ENCODE measurements at regions of chr11 and their contacts with region 1.

Region 1: DNA sequence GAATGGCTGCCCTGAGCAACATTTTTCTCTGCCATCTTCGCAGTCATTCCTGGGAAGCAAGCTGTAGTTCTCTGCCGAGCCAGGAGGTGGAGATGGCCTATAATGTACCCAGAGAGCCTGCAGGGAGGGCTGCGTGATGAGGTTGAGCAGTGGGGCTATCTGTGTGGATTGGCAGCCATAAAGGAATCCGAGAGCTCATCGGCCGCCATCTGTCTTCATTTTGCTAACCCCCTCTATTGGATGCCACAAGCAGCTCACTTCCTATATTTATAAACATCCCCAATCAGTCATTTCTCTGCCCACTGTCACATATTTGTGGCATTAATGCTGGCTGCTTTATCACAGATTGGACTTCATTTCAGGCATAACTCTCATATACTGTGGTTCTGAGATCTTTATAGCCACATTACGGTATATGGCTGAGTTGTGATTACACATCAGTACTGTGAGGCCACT is 209.5 kb downstream of the NTM start:
- DNase-seq: peak; percentile 82
- H3K4me3 ChIP-seq: no peak overlapping the region
- CTCF ChIP-seq: peak; percentile 86

Region 2: GRCh38 chr11:131568305-131568704 is 11.7 kb before region 1 on chr11:
- CTCF ChIA-PET with region 1: interaction called, 13 read pairs
- POLR2A ChIA-PET with region 1: interaction called, 3 read pairs
- DNase-seq: no peak
- H3K4me3 ChIP-seq: no peak overlapping the region
- CTCF ChIP-seq: no peak

Region 3: DNA sequence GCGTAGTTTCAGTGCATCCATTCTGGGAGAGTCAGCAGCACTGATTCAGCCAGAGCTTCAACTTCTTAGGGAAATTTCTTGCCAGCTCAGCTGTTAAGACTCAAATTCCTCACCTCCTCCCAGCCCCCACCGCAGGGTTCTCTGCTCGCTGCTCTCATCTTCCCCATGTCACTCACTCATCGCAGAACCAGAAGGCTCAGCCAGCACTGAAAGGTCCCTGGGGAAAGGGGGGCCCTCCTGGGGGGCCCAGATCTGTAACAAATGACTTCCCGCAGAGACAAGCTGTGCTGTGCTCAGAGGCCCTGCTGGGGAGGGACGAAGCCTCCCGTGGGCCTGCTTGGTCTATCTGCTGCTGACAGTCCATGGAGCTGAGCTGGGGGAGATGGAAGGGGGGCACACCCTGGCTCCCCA is 11.1 kb after region 1 on chr11:
- CTCF ChIA-PET with region 1: interaction called, 32 read pairs
- POLR2A ChIA-PET with region 1: no interaction called
- DNase-seq: no peak
- H3K4me3 ChIP-seq: no peak overlapping the region
- CTCF ChIP-seq: no peak

Region 4: GRCh38 chr11:131609337-131609736 is 29.4 kb after region 1 on chr11:
- CTCF ChIA-PET with region 1: interaction called, 17 read pairs
- POLR2A ChIA-PET with region 1: no interaction called
- DNase-seq: peak; percentile 69
- H3K4me3 ChIP-seq: no peak overlapping the region
- CTCF ChIP-seq: no peak

Region 5: GRCh38 chr11:131629925-131630540 is 50.1 kb after region 1 on chr11:
- CTCF ChIA-PET with region 1: interaction called, 25 read pairs
- POLR2A ChIA-PET with region 1: no interaction called
- DNase-seq: no peak
- H3K4me3 ChIP-seq: no peak overlapping the region
- CTCF ChIP-seq: no peak

Region 6: DNA sequence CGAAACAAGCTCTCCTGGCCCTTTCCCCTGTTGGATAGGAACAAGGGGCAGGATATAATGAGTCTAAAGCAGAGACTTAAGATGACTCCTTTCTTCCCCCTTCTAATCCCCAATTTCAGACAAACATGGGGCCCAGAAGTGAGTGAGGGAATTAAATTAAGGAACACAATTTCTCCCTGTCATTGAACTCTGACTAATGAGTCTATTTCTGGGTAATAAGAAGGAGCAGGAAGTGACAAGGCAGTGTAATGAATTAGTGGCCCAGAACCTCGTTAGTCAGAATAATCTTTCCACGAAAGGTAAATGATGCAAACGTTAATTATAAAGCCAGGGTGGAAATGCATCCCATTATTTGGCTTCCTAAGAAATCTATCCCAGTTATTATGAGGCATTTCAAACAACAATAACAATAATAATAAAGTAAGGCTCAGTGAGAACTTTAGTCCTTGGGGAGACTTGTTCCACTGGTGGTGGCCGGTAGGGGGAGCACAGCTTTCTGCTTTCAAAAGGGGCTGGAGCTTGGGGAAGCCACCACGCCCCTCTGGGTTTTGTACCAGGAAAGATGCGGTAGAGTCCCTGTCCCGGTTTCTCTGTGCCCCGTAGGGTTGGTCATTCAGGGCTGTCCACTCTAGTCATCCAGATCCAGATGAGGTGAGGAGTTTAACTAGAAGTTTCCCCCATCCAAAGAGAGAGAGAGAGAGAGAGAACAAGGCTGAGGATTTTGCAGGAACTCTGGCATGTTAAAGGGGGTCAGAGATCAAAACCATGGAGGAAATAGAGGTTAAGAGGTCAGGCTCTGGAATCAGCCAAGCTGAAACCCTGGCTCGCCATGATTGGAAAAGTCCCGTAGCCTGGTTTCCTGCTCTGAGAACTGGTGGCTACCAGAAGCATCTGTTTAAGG is 88.8 kb after region 1 on chr11:
- CTCF ChIA-PET with region 1: interaction called, 226 read pairs
- POLR2A ChIA-PET with region 1: interaction called, 18 read pairs
- DNase-seq: no peak
- H3K4me3 ChIP-seq: no peak overlapping the region
- CTCF ChIP-seq: peak; percentile 58